Motor neuron (in vitro differentiated cells): ENCODE measurements at regions of chr14 and their contacts with region 1.

Region 1: DNA sequence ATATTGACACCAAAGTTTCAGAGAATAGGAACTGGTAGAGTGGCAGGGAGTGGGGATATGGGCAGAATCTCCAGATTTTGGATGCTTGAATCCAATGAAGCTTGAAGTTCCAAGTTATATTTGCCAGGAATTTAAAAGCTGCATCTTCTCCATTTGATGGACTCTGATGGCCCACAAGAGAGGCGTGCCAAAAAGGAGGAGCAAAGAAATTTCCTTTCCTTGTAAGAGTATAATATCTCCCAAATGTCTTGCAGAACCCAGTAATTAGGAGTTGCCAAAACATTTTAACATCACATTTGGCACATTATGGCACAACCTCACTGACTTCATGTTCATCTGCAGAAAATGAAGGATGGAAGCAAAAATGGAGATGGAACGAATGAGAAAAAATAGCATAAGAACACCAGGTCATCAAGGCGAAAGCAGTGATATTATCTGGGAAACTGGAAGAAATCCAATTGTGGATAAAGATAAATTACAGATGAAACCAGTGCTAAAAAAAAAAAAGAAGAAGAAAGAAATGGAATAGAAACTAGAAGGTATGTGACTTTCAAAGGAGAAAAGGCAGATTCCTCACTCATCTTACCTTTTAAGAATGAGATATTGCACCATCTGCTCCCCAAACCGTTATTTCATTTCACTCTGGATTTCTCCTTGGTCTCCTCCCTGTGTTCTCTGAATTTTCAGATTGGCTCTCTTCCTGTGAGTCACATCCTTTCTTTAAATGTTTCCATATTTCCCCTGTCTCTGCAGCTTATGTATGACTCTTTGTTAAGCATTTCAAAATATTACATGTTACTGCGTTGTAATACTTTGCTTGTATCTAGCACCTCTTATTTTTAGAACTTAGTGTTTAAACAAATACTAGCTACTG is 13.5 kb upstream of the FLRT2 start:
- ATAC-seq: peak in 3 of 8 experiments; percentile 49 to 99 (median 98)
- H3K4me3 ChIP-seq: no peak overlapping the region
- H3K27ac ChIP-seq: no peak overlapping the region
- H3K4me1 ChIP-seq: no peaks in the 10 kb centered on the region

Region 2: GRCh38 chr14:85214471-85214870 is 302.0 kb before region 1 on chr14:
- in situ Hi-C with region 1: loop called in 1 of 9 experiments (anchors 25 kb)
- ATAC-seq: no peak
- H3K4me3 ChIP-seq: no peak overlapping the region
- H3K27ac ChIP-seq: no peak overlapping the region
- H3K4me1 ChIP-seq: no peaks in the 10 kb centered on the region

Region 3: GRCh38 chr14:86038387-86039042 is 522.0 kb after region 1 on chr14:
- in situ Hi-C with region 1: no loop called
- ATAC-seq: peak in 4 of 8 experiments; percentile 67 to 99 (median 98)
- H3K4me3 ChIP-seq: no peak overlapping the region
- H3K27ac ChIP-seq: no peak overlapping the region
- H3K4me1 ChIP-seq: no peaks in the 10 kb centered on the region